ENCODE measurements at regions of chr17 and their contacts with region 1.

Region 1: GRCh38 chr17:76501018-76501826 is at the start of gene RHBDF2:
- DNase-seq: peak; percentile 90 to 99 (median 96)
- ATAC-seq: peak; percentile 90 to 91
- H3K4me3 Mint-ChIP-seq: peak within 1 kb of the TSS; percentile 83 to 90 (median 86)
- H3K27ac Mint-ChIP-seq: peak within 1 kb of the TSS; percentile 93 to 100 (median 98)
- H3K4me1 Mint-ChIP-seq: peaks cover 19 to 69% (median 53%) of the 10 kb centered on the region in 4 donors
- H3K27me3 Mint-ChIP-seq: no peaks in the 10 kb centered on the region
- polyA plus RNA-seq, gene RHBDF2: 4.8 to 10.2 (median 6.2) TPM

Region 2: GRCh38 chr17:76405967-76406647 is 95.1 kb before region 1 on chr17:
- POLR2A ChIA-PET with region 1: no interaction called
- DNase-seq: peak in 1 of 10 donors; percentile 24
- ATAC-seq: no peak
- H3K4me3 Mint-ChIP-seq: peak overlapping the region in 1 of 10 donors; percentile 3
- H3K27ac Mint-ChIP-seq: no peak overlapping the region
- H3K4me1 Mint-ChIP-seq: peaks cover 2 to 30% (median 11%) of the 10 kb centered on the region in 4 donors
- H3K27me3 Mint-ChIP-seq: no peaks in the 10 kb centered on the region

Region 3: GRCh38 chr17:76432712-76433336 is 68.4 kb before region 1 on chr17:
- POLR2A ChIA-PET with region 1: no interaction called
- DNase-seq: no peak
- ATAC-seq: peak; percentile 47 to 60
- H3K4me3 Mint-ChIP-seq: no peak overlapping the region
- H3K27ac Mint-ChIP-seq: peak overlapping the region in 3 of 10 donors; percentile 12 to 48 (median 21)
- H3K4me1 Mint-ChIP-seq: peaks cover 17 to 58% (median 23%) of the 10 kb centered on the region in 4 donors
- H3K27me3 Mint-ChIP-seq: no peaks in the 10 kb centered on the region

Region 4: DNA sequence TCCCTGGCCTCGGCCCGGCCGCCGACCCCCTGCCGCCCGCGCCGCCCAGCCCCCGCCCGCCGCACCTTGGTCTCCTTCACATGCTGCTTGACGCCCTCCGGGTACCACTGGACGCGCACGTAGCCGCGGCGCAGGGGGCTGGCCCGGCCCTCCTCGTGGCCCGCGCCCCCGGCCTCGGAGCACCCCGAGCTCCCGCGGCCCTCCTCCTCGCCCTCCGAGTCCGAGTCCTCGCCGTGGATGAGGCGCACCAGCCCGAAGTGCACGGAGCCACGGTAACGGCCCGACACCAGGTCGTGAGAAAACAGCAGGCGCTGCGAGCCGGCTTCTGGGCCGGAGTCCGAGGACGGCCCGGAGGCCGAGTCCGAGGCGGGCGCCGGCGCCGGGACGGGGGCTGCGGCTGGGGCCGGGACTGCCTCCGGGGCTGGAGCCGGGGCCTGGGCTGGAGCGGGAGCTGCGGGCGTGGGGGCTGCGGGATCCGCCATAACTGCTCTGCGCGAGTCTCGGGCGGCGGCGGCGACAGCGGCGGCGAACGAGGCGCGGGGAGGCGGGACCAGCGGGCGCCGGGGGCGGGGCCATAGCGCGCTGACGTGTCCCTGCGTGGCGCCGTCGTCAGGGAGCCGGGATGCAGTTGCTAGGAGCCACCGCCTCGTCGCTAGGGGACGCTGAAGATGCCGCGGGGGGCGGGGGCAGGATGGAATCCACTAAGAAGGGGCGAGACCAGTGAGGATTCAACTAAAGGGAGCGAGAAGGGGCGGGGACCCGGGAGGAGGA is 48.4 kb before region 1 on chr17 and contains the start of gene UBE2O:
- POLR2A ChIA-PET with region 1: interaction called, 19 read pairs
- DNase-seq: peak; percentile 89 to 97 (median 94)
- ATAC-seq: peak; percentile 89 to 90
- H3K4me3 Mint-ChIP-seq: peak within 1 kb of the TSS; percentile 65 to 92 (median 86)
- H3K27ac Mint-ChIP-seq: peak within 1 kb of the TSS; percentile 77 to 98 (median 96)
- H3K4me1 Mint-ChIP-seq: peaks cover 14 to 44% (median 42%) of the 10 kb centered on the region in 4 donors
- H3K27me3 Mint-ChIP-seq: no peaks in the 10 kb centered on the region
- polyA plus RNA-seq, gene UBE2O: 8.8 to 14.4 (median 10.6) TPM

Region 5: DNA sequence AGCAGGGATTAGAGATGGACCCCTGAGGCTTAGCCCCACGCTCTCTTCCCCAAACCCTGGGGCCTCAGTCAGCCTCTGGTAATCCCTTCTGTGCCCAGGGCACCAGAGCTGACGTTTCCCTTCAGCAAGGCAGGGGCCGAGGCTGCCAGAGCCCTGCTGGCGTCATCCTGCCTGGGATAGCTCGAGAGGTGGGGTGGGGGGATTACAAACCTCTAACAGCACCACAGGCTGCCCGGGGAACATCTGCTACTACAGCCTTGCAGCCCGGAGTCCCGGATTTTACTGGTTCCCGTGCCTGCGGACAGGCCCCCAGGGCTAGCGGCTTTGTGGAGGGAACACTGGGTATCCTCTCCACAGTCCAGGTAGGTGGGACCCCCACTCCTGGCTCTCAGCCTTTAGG is 33.9 kb before region 1 on chr17 and contains the start of gene AANAT:
- POLR2A ChIA-PET with region 1: interaction called, 22 read pairs
- DNase-seq: no peak
- ATAC-seq: no peak
- H3K4me3 Mint-ChIP-seq: no peak within 1 kb of the TSS
- H3K27ac Mint-ChIP-seq: peak within 1 kb of the TSS in 3 of 10 donors; percentile 1 to 53 (median 48)
- H3K4me1 Mint-ChIP-seq: peaks cover 4 to 9% (median 6%) of the 10 kb centered on the region in 4 donors
- H3K27me3 Mint-ChIP-seq: peaks cover 0 to 1% (median 0%) of the 10 kb centered on the region in 5 donors
- polyA plus RNA-seq, gene AANAT: not detected

Region 6: DNA sequence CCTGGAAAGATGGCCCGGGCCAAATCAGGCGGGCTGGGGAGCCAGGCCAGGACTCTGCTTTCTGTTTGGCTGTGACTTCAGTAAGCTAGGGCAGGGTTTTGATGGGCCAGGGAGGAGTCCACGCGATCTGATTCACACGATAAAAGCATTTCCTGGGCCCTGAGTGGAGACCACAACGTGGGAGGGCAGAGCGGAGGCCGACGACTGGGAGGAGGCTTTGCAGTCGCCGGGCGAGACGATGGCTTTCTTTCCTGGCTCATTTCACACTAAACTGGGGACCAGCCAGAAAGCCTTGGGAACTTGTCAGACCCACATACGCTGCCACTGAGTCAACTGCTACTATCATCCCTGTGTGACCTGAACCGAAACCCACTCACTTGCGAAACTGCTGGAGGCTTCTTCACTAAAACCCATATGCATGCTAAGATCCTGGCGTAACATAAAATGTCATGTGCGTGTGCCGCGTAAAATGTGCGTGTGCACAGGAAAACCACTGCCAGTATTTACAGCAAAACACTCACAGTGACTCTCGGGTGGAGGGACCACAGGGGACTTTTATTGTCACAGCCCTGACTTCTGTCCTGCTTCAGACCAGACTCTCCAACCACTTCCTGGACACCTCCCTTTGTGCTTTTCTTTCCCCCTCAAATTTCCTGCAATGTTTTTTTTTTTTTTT is 14.2 kb after region 1 on chr17:
- POLR2A ChIA-PET with region 1: interaction called, 10 read pairs
- DNase-seq: peak; percentile 42 to 94 (median 89)
- ATAC-seq: peak; percentile 82 to 86
- H3K4me3 Mint-ChIP-seq: peak overlapping the region; percentile 73 to 89 (median 80)
- H3K27ac Mint-ChIP-seq: peak overlapping the region; percentile 96 to 100 (median 99)
- H3K4me1 Mint-ChIP-seq: peaks cover 22 to 66% (median 63%) of the 10 kb centered on the region in 4 donors
- H3K27me3 Mint-ChIP-seq: no peaks in the 10 kb centered on the region

Measured in naive thymus-derived CD8-positive, alpha-beta T cell (primary cell).